ENCODE measurements at regions of chr1 and their contacts with region 1.

Region 1: DNA sequence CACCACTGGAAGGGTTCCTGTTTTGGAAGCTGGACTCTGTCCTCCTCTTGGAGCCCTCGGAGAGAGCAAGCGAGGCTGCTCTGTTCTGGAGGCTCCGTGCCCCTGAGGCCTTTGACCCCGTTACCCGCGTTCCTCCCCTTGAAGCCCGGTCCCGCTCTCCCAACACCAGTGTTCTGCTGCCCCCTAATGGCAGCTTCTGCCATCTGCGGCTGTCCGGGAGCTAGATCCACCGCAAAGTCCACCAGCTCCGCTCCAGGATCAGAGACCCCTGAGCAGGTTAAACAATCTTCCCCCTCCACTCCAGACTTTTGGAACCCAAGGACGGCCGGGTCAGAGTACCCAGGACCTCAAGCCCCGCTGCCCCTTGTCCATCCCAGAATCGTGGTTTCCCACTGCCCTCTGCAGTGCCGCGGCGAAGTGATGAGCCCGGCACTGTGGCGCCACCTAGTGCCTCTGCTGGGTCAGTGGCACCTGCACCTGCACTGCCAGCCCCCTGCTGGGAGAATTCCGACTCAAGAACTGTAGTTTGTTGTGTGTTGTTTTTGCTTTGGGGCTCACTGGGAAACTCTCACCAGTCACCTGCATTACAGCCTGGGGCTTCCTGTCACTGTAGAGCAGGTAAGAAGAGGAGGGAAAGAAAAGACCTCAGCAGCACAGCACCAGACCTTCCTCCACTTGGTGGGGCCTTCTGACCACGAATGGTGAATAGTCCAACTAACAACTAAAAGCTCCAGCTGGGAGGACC is 63.5 kb upstream of the NFASC start:
- DNase-seq: peak; percentile 26 to 83
- H3K4me3 ChIP-seq: peak overlapping the region; percentile 62 to 66
- H3K27ac ChIP-seq: no peak overlapping the region
- H3K4me1 ChIP-seq: peaks cover 0 to 2% of the 10 kb centered on the region in 2 donors
- H3K27me3 ChIP-seq: no peaks in the 10 kb centered on the region
- CTCF ChIP-seq: peak; percentile 87 to 91 (median 90)

Region 2: DNA sequence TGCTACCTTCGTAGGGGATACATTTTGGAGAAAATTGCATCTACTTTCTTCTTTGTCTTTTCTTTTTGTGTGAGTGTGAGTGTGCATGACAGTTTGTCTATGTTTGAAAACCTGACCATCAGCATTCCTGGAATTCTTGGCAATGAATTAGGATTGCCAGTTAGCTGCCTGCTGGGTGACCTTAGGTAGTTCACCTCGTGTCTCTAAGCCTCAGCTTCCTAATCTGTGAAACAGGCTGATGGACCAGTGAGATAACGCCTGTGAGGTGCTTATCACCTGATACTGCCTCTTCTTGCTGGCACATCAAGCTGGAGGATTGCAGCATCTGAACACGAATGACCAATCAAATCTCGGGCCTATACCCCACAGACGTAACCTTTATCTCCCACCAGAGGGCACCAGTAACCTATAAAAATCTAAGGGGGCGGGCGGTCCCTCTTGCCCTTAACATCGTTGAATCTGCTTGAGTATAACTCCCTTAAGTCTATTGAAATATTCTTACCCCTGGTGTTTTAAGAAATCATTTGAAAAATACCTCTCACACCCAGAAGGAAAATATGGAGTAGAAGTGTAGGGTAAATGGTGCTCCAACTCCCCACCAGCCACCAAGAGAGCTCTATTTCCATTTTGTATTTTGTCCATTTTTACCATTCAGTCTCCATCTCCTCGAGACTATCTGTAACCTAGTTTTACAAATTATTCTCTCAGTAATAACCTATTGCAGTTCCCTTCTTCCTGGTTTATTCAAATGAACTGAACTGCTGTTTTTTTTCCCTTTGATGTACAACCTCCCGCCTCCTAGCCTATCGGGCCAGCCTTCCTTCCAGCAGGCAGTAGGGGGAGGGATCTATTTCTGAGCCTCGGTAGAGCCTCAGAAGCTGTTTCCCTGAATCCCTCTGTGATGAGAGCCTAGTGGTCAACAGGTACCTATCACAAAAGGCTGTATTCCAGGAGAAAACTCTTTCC is 241.2 kb before region 1 on chr1:
- intact Hi-C with region 1: loop called (anchors 2 kb)
- DNase-seq: no peak
- H3K4me3 ChIP-seq: no peak overlapping the region
- H3K27ac ChIP-seq: no peak overlapping the region
- H3K4me1 ChIP-seq: no peaks in the 10 kb centered on the region
- H3K27me3 ChIP-seq: no peaks in the 10 kb centered on the region
- CTCF ChIP-seq: peak; percentile 37 to 47 (median 47)

Region 3: DNA sequence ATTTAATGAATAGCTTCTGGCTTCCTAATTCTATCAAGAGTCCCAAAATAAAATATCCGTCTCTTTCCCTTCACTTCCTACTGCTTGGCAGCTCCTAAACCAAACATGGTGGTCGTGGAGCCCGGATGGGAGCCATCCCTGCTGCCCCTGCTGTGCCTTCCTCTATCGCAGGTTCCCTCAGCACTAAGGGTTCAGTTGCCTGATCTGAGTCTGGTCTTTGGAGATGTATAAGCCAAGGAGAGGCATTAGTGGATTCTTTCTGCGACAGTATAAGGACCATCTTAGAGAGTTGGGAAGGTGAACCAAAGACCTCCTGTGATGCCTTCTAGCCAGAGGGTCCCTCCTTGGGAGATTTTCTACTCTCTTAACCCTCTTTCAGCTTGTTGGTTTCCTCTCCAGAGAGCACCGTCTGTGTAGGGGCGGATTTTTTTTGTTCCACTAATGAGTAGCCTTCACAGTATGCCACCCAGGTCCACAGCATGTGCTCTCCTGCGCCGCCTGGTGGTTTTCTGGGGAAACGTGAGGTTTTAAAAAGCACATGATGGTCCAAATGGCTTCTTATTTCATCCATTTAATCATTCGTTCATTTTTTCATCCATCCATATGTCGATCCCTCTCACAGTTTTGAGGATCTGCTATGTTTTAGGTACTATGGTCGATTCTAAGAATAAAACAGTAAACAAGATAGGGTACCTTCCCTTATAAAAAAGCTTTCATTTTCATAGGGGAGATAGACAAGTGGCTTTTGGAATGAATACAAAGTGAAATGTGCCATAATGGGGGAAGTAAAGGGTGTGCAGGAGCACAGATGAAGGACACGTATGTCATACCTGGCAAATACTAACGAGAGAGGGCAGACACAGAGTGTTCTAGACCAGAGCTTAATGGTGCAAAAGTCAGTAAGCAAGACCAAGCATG is 134.6 kb after region 1 on chr1:
- intact Hi-C with region 1: loop called (anchors 2 kb)
- DNase-seq: peak in 1 of 2 donors; percentile 73
- H3K4me3 ChIP-seq: no peak overlapping the region
- H3K27ac ChIP-seq: no peak overlapping the region
- H3K4me1 ChIP-seq: no peaks in the 10 kb centered on the region
- H3K27me3 ChIP-seq: no peaks in the 10 kb centered on the region
- CTCF ChIP-seq: peak; percentile 71 to 84 (median 74)

Measured in ascending aorta (tissue), 2 donors.